Breast epithelium (tissue), 4 donors: ENCODE measurements at regions of chr17 and their contacts with region 1.

Region 1: DNA sequence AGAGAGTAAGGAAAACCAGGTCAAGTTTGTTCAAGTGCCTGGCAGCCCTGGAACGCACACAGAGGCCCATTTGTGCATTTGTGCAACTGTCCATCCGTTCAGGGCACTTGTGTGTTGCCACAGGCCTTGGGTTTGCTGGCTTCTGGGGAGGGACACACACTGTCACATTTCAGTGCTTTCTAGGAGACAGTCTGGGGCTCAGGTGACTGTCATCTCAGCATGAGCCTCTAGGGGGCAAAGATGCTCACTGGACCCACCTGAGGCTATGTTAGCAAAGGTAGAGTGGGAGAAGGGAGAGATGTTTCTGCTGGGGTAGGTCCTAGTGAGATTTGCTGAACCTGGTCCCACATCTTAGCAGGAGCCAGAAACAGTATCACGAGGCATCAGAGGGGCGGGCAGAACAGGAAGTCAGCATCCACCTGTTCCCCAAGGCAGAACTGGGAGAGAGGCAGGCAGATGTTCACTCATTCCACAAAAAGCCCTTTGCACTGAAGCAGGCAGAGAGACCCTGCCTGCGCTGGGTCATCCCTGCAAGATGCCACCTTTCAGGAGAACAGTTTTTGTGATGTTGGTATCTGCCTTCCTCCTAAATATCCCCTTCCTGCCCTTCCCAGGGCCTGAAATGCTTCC is 48.5 kb downstream of the RAI1 start:
- DNase-seq: no peak
- H3K4me3 ChIP-seq: no peak overlapping the region
- H3K27ac ChIP-seq: peak overlapping the region; percentile 70 to 93
- H3K4me1 ChIP-seq: peaks cover 5 to 20% of the 10 kb centered on the region in 2 donors
- H3K27me3 ChIP-seq: no peaks in the 10 kb centered on the region
- CTCF ChIP-seq: peak; percentile 53 to 71 (median 58)
- POLR2A ChIP-seq: no peak

Region 2: GRCh38 chr17:16428098-16428882 is 1301.4 kb before region 1 on chr17:
- intact Hi-C with region 1: loop called (anchors 5 kb)
- DNase-seq: no peak
- H3K4me3 ChIP-seq: no peak overlapping the region
- H3K27ac ChIP-seq: no peak overlapping the region
- H3K4me1 ChIP-seq: no peaks in the 10 kb centered on the region
- H3K27me3 ChIP-seq: no peaks in the 10 kb centered on the region
- CTCF ChIP-seq: peak in 2 of 3 donors; percentile 22 to 35
- POLR2A ChIP-seq: no peak

Region 3: DNA sequence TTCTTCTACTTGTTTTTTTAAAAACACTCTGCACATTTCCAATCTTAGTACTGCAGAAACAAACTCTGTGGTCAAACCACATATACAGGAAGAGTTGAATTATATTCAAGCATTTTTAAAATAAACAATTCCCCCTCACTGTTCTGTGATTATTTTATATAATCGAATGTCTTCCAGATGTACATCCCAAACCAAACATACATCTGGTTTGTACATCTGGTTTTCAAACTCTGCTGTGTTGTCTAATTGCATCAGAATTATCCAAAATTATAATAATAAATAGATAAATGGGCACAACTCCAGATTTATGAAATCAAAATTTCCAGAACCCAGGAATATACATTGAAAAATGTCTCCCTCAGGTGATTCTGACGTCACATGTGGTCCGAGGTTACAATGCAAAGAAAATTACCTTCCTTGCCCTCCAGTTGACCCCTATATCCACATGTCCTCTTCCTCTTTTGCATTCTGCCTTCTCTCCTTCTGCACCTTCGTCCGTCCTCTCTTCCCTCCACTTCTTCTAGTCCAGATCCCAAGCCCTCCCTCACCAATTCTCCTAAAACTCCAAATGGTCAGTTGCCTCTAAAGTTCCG is 1053.0 kb before region 1 on chr17:
- intact Hi-C with region 1: no loop called
- DNase-seq: no peak
- H3K4me3 ChIP-seq: no peak overlapping the region
- H3K27ac ChIP-seq: no peak overlapping the region
- H3K4me1 ChIP-seq: no peaks in the 10 kb centered on the region
- H3K27me3 ChIP-seq: no peaks in the 10 kb centered on the region
- CTCF ChIP-seq: no peak
- POLR2A ChIP-seq: no peak

Region 4: GRCh38 chr17:17551361-17551760 is 178.4 kb before region 1 on chr17:
- intact Hi-C with region 1: loop called (anchors 5 kb)
- DNase-seq: no peak
- H3K4me3 ChIP-seq: no peak overlapping the region
- H3K27ac ChIP-seq: no peak overlapping the region
- H3K4me1 ChIP-seq: no peaks in the 10 kb centered on the region
- H3K27me3 ChIP-seq: no peaks in the 10 kb centered on the region
- CTCF ChIP-seq: no peak
- POLR2A ChIP-seq: no peak